Tibial artery (tissue), 4 donors: ENCODE measurements at regions of chr2 and their contacts with region 1.

Region 1: DNA sequence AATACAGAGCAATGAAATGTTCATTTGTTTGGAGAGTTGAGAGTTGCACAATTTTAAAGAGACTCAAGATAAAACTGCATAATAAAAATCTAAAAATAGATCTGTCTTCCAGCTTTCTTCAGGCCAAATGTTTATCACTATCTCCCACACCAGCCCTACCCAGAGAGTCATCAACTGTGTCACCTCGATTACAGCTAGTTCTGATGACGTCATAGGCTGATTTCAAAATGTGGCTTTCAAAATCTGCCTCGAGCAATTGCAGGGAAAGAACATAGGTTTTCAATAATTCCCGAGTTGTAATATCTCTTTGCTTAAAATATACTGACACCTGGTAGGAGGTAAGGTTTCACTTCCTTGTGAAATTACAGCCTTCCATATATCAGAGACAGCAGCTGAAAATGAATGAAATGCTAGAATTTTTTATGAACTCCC is 677.6 kb upstream of the ID2 start:
- DNase-seq: peak in 1 of 2 donors; percentile 69
- H3K4me3 ChIP-seq: peak overlapping the region; percentile 14 to 33
- H3K27ac ChIP-seq: peak overlapping the region; percentile 68 to 79
- H3K4me1 ChIP-seq: peaks cover 0 to 19% (median 15%) of the 10 kb centered on the region in 4 donors
- H3K27me3 ChIP-seq: no peaks in the 10 kb centered on the region
- CTCF ChIP-seq: no peak

Region 2: DNA sequence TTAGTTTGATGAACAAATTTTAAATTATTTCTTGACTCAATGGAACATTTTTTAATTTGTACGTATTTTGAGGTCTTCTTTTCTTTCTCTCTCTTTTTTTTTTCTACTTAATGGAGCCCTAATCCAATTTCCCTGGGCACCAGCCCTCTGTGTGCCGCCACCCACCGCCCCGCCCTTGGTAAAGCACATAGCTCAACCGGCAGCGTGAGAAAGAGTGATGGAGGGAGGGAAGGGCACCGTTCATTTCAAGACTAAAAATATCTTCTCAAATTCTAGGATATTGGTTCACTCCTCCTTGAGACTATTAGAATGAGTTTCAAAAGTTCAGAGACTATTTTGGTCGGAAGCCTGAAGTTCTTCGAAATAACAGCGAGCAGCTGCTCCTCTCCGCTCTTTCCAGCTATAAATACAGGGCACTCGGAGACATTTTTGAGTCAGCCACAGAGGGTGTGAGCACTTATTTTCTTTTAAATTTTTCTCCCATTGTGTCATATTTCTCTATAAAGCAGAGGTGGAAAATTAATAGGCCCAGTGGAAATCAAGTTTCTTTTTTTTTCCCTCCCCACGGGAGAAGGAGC is 54.1 kb before region 1 on chr2:
- intact Hi-C with region 1: loop called (anchors 5 kb)
- DNase-seq: peak in 1 of 2 donors; percentile 72
- H3K4me3 ChIP-seq: no peak overlapping the region
- H3K27ac ChIP-seq: peak overlapping the region; percentile 62 to 74
- H3K4me1 ChIP-seq: peaks cover 0 to 24% (median 13%) of the 10 kb centered on the region in 4 donors
- H3K27me3 ChIP-seq: no peaks in the 10 kb centered on the region
- CTCF ChIP-seq: no peak